Dorsolateral prefrontal cortex (tissue), 120 donors: ENCODE measurements at regions of chr6 and their contacts with region 1.

Region 1: DNA sequence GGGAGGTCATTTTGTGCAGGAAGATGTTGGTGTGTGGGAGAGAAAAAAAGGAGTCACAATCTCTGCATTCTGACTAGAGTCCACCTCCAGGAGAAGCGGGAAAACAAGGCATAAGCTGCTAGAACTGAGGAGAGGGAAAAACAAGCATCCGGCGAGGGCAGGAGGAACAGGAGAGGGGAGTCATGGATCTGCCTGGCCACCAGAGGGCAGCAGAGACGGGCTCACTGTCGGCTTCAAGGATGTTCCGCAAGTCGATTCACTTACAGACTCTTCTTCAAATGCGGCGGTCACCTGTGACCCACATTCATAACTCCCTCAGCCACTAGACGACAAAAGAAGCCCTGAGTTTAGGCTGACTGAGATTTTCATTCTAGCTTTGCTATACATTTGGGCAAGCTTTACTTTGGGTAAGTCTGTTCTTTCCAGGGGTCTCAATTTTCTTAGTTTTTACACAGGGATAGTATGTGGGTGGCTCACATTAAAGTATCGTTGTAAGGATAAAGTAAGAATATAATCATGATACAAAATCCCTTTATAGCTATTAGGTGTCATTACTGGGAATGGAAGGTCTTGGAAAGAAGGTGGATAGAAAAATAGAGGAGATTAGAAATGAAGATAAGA is 6.6 kb upstream of the BTNL2 start:
- DNase-seq: peak; percentile 60 to 83 (median 72)
- H3K4me3 ChIP-seq: no peak overlapping the region
- H3K27ac ChIP-seq: no peak overlapping the region
- H3K27me3 ChIP-seq: peaks cover 0 to 91% (median 38%) of the 10 kb centered on the region in 45 donors
- CTCF ChIP-seq: peak; percentile 72 to 99 (median 96)

Region 2: DNA sequence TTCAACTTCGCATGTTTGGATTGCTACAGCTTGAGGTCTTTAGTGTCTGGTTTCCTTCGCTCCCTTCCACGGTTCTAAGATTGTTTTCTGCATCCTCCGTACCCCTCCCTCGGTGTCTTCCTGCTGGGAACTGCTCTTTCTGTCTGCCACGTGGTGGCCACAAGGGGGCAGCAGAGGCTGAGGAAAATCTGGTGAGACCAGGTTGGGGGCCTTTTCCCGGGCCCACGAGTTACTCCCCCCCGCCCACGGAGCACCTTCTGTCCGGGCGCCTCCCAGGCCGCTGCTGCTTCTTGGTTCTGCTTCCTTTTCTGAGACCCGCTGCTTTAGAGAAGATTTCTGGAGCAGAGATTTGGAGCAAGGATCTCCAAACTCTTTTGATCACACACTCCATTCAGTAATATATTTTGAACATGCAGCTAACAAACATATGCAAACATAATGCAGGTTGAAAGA is 168.6 kb before region 1 on chr6:
- intact Hi-C with region 1: loop called (anchors 5 to 10 kb)
- DNase-seq: peak; percentile 65 to 88 (median 76)
- H3K4me3 ChIP-seq: peak overlapping the region in 36 of 59 donors; percentile 5 to 46 (median 30)
- H3K27ac ChIP-seq: peak overlapping the region in 11 of 59 donors; percentile 3 to 65 (median 30)
- H3K27me3 ChIP-seq: no peaks in the 10 kb centered on the region
- CTCF ChIP-seq: peak; percentile 79 to 98 (median 94)

Region 3: DNA sequence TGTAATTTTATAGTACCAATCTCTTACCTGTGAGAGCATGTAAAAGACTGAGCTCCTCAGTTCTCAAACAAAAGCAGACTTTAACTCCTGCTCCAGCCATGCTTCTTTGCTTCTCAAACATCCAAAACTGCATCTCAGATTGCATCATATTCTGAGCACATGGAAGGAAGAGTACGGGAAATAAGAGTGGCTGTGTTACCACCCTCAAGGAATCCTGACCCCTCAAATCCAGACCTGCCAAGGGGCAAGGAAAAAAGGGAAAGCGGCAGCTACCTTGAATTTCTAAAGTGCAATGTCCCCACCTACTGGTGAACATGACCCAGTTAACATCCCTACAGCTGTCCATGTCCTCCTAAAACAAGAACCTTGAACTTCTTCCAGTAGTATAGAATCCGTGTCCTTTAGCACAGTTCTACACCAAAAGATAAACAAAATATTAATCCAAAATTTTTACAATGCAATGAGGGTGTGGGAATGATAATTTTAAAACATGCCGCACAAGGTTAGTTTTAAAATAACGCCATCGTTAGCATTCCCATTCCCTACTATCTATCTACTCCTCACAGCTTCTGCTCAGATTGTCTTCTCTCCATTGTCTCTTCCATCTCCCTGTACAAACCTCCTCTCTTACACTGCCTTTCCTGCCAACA is 287.0 kb after region 1 on chr6:
- intact Hi-C with region 1: loop called (anchors 5 to 10 kb)
- DNase-seq: peak in 2 of 10 donors; percentile 4 to 21
- H3K4me3 ChIP-seq: no peak overlapping the region
- H3K27ac ChIP-seq: no peak overlapping the region
- H3K27me3 ChIP-seq: peaks cover 0 to 62% (median 6%) of the 10 kb centered on the region in 45 donors
- CTCF ChIP-seq: peak; percentile 33 to 88 (median 72)

Region 4: DNA sequence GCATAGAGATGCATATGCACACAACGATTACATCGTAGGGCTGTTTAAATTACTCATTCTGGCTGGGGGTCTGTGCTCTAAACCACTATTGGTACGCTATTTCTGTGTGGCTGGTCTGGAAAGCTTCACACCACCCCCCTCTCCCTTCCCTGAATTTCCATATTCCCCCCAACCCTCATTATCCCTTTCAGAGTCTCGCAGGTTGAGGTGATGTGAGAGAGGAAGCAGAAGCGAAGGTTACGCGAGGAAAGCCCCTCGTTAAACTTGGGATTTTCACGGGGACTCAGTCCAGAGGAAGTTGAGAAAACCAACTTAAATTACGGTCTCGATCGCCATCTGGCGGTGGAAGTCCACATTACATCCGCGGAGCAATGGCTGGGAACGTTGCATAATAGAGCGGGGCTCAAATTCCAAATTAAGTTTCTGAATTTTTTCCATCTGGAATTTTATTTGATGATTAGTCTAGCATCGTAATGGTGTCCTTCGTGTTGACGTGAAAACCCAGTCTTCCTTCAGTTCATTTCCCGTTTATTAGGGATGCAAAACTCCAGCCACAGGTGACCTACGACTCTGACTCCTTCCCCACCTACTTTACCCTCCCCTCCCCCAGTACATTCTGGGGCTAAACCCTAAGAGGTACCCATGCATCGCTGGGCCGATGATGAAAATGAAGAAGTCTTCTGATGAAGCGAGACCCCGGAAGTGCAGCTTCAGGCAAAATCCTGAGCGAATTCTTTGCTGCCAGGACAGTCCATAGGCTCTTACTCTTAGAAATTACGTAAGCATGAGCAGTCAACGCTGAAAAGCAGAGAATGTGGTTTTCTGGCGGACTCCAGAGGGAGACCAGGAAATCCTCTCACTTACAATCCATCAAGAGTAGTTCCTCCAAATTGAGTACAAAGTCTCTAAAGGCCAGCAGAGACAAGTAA is 383.6 kb after region 1 on chr6:
- intact Hi-C with region 1: loop called (anchors 2 to 5 kb)
- DNase-seq: peak; percentile 60 to 87 (median 73)
- H3K4me3 ChIP-seq: peak overlapping the region in 38 of 59 donors; percentile 1 to 49 (median 23)
- H3K27ac ChIP-seq: peak overlapping the region in 3 of 59 donors; percentile 8 to 40 (median 9)
- H3K27me3 ChIP-seq: peaks cover 0 to 73% (median 13%) of the 10 kb centered on the region in 45 donors
- CTCF ChIP-seq: peak; percentile 82 to 99 (median 93)

Region 5: DNA sequence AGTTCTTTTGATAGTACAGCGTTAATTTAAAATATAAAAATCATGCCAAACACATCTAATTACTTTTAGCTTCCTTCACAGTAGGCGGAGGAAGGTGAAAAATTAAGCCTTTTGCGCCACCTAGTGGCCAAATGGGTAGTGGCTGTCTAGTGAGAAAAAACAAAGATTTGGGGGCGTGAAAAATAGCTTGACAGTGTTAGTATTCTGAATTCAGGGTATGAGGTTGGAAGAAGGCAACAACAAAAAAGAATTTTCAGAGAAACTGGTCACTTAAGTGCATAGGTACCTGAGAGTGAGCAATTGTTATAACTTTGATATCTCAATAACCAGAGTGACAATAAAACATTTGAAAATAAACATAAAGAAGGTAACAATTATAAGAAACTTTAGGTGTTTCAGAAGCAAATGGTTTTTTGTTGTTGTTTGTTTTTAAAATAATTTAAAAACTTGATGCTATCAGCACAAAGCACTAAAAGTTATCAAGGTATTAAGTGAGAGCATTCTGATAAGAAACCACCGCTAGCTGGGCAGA is 454.8 kb after region 1 on chr6:
- intact Hi-C with region 1: loop called (anchors 5 to 10 kb)
- DNase-seq: peak; percentile 55 to 84 (median 75)
- H3K4me3 ChIP-seq: peak overlapping the region in 5 of 59 donors; percentile 1 to 26 (median 5)
- H3K27ac ChIP-seq: no peak overlapping the region
- H3K27me3 ChIP-seq: peaks cover 0 to 3% (median 0%) of the 10 kb centered on the region in 45 donors
- CTCF ChIP-seq: peak; percentile 91 to 100 (median 98)